GM12878 (cell line): ENCODE measurements at regions of chr18 and their contacts with region 1.

Region 1: GRCh38 chr18:6482198-6482977 is 67.7 kb upstream of the L3MBTL4 start:
- DNase-seq: no peak
- ATAC-seq: peak; percentile 96
- H3K4me3 ChIP-seq: no peak overlapping the region
- H3K27ac ChIP-seq: no peak overlapping the region
- H3K4me1 ChIP-seq: no peaks in the 10 kb centered on the region
- H3K27me3 ChIP-seq: peaks cover 0 to 2% of the 10 kb centered on the region in 2 experiments; a peak in 1 of 4 replicates
- CTCF ChIP-seq: peak; percentile 63 to 85 (median 83)
- EP300 ChIP-seq: no peak
- POLR2A ChIP-seq: no peak
- RAD21 ChIP-seq: peak; percentile 88

Region 2: GRCh38 chr18:5879479-5879882 is 602.9 kb before region 1 on chr18:
- CTCF ChIA-PET with region 1: interaction called, 6 read pairs
- POLR2A ChIA-PET with region 1: no interaction called
- RAD21 ChIA-PET with region 1: interaction called, 3 read pairs
- SMC1A ChIA-PET with region 1: interaction called, 5 read pairs
- in situ Hi-C with region 1: no loop called
- intact Hi-C with region 1: loop called (anchors 1 kb)
- DNase-seq: no peak
- ATAC-seq: no peak
- H3K4me3 ChIP-seq: no peak overlapping the region
- H3K27ac ChIP-seq: no peak overlapping the region
- H3K4me1 ChIP-seq: no peaks in the 10 kb centered on the region
- H3K27me3 ChIP-seq: no peaks in the 10 kb centered on the region; a peak in 2 of 4 replicates
- CTCF ChIP-seq: peak; percentile 66 to 72 (median 70); a peak in 5 of 6 replicates
- EP300 ChIP-seq: no peak
- POLR2A ChIP-seq: no peak
- RAD21 ChIP-seq: peak; percentile 92